Esophagus muscularis mucosa (tissue), 4 donors: ENCODE measurements at regions of chr20 and their contacts with region 1.

Region 1: DNA sequence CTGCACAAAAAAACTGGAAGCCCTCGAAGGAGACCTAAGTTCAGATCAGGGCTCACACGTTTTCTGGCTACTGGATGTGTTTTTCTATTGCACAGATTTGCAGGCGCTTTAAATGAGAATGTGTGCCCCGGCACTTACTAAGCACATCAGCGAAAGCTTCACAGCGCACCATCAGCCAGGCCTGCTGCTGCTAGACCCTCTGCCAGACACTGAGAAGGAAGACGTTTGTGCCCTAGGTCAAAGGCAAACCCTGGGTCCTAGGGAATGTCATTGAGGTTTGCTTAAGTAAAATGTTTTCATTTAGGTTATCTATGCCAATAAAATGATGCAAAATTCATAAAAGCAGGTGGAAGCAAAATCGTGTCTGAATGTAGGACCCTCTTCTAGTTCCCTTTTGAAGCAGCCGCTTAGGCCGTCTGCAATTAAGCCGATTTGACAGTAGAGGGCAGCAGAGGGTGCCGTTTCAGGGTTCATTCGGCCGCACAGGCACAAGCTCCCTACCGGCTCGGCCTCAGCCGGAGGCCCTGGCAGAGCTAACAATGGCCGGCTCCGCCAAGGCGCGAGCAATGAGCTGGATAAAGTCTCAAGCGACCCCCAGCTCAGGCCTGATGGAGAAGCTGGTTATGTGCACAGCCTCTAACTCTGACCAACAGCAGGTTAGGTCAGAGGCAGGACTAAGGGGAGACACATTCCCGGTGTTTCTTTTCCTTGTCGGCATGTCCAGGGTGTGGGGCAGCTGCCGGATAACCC is 107.2 kb upstream of the FOXA2 start:
- DNase-seq: peak; percentile 92
- H3K4me3 ChIP-seq: peak overlapping the region in 3 of 4 donors; percentile 11 to 24 (median 18)
- H3K27ac ChIP-seq: no peak overlapping the region
- H3K4me1 ChIP-seq: peaks cover 0 to 6% (median 6%) of the 10 kb centered on the region in 4 donors
- H3K27me3 ChIP-seq: peaks cover 0 to 14% (median 0%) of the 10 kb centered on the region in 4 donors
- CTCF ChIP-seq: peak; percentile 87 to 98 (median 90)
- EP300 ChIP-seq: no peak
- POLR2A ChIP-seq: no peak

Region 2: DNA sequence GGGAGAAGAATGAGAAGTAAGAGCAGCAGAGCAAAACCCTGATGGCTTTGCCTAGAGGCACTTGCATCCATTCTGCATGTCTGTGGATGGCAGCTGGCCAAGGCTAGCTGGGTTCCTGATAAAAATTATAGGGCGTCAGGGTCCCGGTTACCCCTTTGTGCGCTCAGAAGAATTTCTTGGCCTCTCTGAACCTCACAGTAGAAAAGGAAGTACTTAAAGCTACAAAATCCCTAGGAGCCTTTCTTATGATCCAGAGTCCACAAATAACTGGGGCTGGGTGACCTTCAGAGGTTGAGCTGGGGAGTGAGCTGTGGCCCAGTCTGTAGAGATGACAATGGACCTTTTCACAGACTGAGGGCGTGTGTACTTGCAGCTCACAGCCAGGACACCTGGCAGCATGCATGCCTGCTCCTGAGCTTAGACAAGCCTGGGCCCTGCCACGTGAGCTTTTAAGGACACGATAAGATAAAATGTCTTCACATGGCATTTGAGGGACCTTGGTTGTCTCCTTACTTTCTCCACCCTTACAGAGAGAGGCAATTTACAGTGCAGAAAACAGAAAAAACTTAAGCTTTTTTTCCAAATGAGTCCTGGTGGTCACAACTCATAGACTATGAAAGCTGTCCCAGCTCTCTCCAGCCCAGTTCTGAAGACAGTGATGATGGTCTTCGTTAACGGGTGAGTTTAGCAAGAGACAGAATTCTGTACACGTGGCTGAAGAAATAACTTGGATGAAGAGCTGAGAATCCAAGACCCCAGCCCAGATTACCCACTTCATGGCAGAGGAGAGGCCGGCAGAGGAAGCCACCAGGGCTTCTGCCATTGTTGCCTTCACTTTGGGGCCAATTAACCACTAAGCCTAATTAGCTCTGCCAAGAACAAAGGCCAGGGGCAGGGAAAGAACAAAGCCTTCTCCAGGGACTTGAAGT is 157.5 kb before region 1 on chr20:
- intact Hi-C with region 1: no loop called
- DNase-seq: peak; percentile 55
- H3K4me3 ChIP-seq: no peak overlapping the region
- H3K27ac ChIP-seq: no peak overlapping the region
- H3K4me1 ChIP-seq: no peaks in the 10 kb centered on the region
- H3K27me3 ChIP-seq: no peaks in the 10 kb centered on the region
- CTCF ChIP-seq: no peak
- EP300 ChIP-seq: no peak
- POLR2A ChIP-seq: no peak

Region 3: DNA sequence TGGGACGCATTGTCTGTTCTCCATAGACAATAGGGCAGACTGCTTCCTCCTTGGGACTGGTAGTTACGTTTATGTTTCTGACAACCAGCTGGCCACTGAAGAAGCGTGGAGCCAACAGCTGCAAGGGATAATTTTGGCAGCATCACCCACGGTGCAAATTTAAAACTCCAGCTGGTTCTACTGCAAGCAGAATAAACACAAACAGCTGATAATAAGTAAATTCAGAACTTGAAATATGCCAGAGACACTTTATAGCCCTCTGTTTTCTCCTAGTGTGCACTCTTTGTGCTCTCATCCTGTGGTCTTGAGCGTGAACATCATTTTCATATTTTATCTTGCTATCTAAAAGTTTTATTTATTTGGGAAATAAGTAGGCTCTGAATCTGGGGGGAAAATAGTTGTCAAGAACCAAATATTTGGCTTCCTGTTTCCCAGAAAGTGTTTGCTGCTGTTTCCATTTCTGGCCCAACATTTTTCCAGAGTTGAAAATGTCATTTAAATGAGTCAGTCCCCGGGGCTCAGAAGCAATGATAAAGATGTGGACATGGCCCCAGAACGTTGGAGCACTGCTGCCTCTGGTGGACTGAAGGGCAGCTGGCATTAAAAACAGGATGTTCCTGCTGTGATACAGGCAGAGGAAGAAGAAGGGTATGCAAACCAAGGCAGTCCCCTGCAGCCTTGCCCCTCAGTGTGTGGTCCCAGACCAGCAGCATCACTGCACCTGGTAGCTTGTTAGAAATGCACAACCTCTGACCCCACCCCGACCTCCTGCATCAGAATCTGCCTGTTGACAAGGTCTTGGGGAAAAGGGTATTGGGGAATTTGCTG is 370.4 kb after region 1 on chr20:
- intact Hi-C with region 1: loop called (anchors 5 kb)
- DNase-seq: no peak
- H3K4me3 ChIP-seq: no peak overlapping the region
- H3K27ac ChIP-seq: peak overlapping the region; percentile 19 to 65 (median 54)
- H3K4me1 ChIP-seq: peaks cover 30 to 46% (median 38%) of the 10 kb centered on the region in 4 donors
- H3K27me3 ChIP-seq: no peaks in the 10 kb centered on the region
- CTCF ChIP-seq: peak in 1 of 3 experiments; percentile 51
- EP300 ChIP-seq: no peak
- POLR2A ChIP-seq: no peak

Region 4: GRCh38 chr20:23254034-23254433 is 562.5 kb after region 1 on chr20:
- intact Hi-C with region 1: loop called (anchors 5 kb)
- DNase-seq: peak; percentile 74
- H3K4me3 ChIP-seq: no peak overlapping the region
- H3K27ac ChIP-seq: no peak overlapping the region
- H3K4me1 ChIP-seq: peaks cover 14 to 26% (median 21%) of the 10 kb centered on the region in 4 donors
- H3K27me3 ChIP-seq: peaks cover 0 to 34% (median 0%) of the 10 kb centered on the region in 4 donors
- CTCF ChIP-seq: no peak
- EP300 ChIP-seq: no peak
- POLR2A ChIP-seq: no peak

Region 5: GRCh38 chr20:23337301-23337700 is 645.8 kb after region 1 on chr20:
- intact Hi-C with region 1: loop called (anchors 5 kb)
- DNase-seq: no peak
- H3K4me3 ChIP-seq: no peak overlapping the region
- H3K27ac ChIP-seq: no peak overlapping the region
- H3K4me1 ChIP-seq: peaks cover 0 to 8% (median 6%) of the 10 kb centered on the region in 4 donors
- H3K27me3 ChIP-seq: no peaks in the 10 kb centered on the region
- CTCF ChIP-seq: no peak
- EP300 ChIP-seq: no peak
- POLR2A ChIP-seq: no peak